Transverse colon (tissue), 4 donors: ENCODE measurements at regions of chr10 and their contacts with region 1.

Region 1: GRCh38 chr10:18195060-18195799 is 55.0 kb downstream of the CACNB2 start:
- DNase-seq: peak; percentile 24
- H3K4me3 ChIP-seq: no peak overlapping the region
- H3K27ac ChIP-seq: peak overlapping the region; percentile 59 to 83 (median 69)
- H3K4me1 ChIP-seq: peaks cover 0 to 30% (median 11%) of the 10 kb centered on the region in 4 donors
- H3K27me3 ChIP-seq: no peaks in the 10 kb centered on the region
- CTCF ChIP-seq: no peak
- EP300 ChIP-seq: no peak
- POLR2A ChIP-seq: no peak

Region 2: GRCh38 chr10:18056583-18056982 is 138.6 kb before region 1 on chr10:
- in situ Hi-C with region 1: no loop called
- intact Hi-C with region 1: no loop called
- DNase-seq: no peak
- H3K4me3 ChIP-seq: no peak overlapping the region
- H3K27ac ChIP-seq: no peak overlapping the region
- H3K4me1 ChIP-seq: peaks cover 0 to 7% (median 2%) of the 10 kb centered on the region in 4 donors
- H3K27me3 ChIP-seq: no peaks in the 10 kb centered on the region
- CTCF ChIP-seq: no peak
- EP300 ChIP-seq: no peak
- POLR2A ChIP-seq: no peak

Region 3: DNA sequence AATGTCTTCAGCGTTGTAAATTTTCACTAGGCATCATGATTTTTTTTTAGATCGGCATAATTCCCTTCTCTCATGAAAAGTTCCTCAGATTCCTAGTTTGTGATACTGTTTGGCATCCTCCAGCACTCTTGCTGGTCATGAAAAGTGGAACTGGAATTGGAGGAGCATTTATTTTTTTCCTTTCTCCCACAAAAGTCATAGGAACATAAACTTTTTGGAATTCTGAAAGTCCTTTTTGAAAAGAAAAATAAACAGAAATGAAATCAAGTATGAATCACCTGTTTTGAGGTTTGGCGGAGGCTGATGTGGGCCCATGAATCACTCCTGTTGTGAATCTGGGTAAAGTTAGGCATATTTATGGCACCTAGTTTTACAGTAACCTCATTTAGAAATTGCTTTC is 37.3 kb before region 1 on chr10:
- in situ Hi-C with region 1: no loop called
- intact Hi-C with region 1: loop called (anchors 5 kb)
- DNase-seq: no peak
- H3K4me3 ChIP-seq: no peak overlapping the region
- H3K27ac ChIP-seq: peak overlapping the region; percentile 57 to 74 (median 72)
- H3K4me1 ChIP-seq: peaks cover 2 to 24% (median 7%) of the 10 kb centered on the region in 4 donors
- H3K27me3 ChIP-seq: no peaks in the 10 kb centered on the region
- CTCF ChIP-seq: no peak
- EP300 ChIP-seq: no peak
- POLR2A ChIP-seq: no peak